Activated CD4-positive, alpha-beta T cell treated with anti-CD3 and anti-CD28 coated beads, Interleukin-2, amount 10 ng/mL, durations not matched to agents 24 days and 14 days (primary cell): ENCODE measurements at regions of chr2 and their contacts with region 1.

Region 1: DNA sequence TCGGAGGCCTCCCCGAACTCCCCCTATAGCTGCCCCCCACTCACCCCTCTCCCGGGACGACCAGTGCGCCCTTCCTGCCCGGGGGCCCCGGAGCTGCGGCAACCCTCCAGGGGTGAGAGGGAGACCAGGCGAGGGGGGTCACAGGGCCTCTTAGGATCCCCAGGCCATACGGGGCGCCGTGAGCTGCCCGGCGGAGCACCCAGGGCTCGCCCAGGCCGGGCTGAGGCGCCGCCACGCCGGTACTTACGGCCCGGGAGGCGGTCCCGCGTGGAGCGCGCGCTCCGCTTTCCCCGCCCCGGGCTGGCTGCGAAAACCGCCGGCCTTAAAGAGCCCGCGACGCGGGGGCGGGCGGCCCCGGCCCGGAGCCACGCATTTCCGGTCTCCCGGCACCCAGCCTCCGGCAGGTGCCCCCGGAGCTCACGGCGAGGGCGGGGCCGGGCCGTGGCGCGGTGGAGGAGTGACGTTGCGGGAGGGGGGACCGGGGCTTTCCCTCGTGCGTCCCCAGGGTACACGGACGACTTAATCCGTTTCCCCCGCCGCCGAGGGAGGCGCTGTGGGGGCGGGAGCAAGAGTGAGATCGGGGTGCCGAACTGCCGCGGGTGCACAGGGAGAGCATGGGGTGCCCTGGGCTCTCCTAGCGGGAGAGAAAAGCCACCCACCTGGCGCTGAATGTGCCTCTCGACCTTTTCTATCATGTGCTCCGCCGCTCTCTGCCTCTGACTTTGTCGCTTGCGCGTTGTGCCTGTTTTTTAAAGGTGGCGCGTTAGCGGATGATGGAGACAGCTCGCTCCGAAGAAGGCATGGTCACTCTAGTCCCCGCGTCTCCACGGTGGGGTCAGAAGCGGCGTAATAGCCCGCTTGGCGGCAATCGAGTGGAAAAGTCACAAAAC is at the start of gene METTL21A:
- DNase-seq: peak; percentile 98
- H3K4me3 Mint-ChIP-seq: peak within 1 kb of the TSS; percentile 95
- H3K27ac Mint-ChIP-seq: peak within 1 kb of the TSS; percentile 98
- H3K4me1 Mint-ChIP-seq: peaks cover 32% of the 10 kb centered on the region
- H3K27me3 Mint-ChIP-seq: no peaks in the 10 kb centered on the region
- total RNA-seq, gene METTL21A: 37.9 and 42.6 TPM in 2 replicates

Region 2: GRCh38 chr2:206765242-206766056 is 859.8 kb before region 1 on chr2 and contains the starts of genes FASTKD2 and MDH1B:
- intact Hi-C with region 1: loop called (anchors 2 kb)
- DNase-seq: peak; percentile 95
- H3K4me3 Mint-ChIP-seq: peak within 1 kb of the TSS; percentile 95
- H3K27ac Mint-ChIP-seq: peak within 1 kb of the TSS; percentile 99
- H3K4me1 Mint-ChIP-seq: peaks cover 29% of the 10 kb centered on the region
- H3K27me3 Mint-ChIP-seq: peaks cover 4% of the 10 kb centered on the region
- total RNA-seq, gene FASTKD2: 39.1 and 39.2 TPM in 2 replicates
- total RNA-seq, gene MDH1B: 0.12 and 0.47 TPM in 2 replicates

Region 3: GRCh38 chr2:207640661-207641060 is 15.4 kb after region 1 on chr2:
- intact Hi-C with region 1: no loop called
- DNase-seq: no peak
- H3K4me3 Mint-ChIP-seq: no peak overlapping the region
- H3K27ac Mint-ChIP-seq: no peak overlapping the region
- H3K4me1 Mint-ChIP-seq: no peaks in the 10 kb centered on the region
- H3K27me3 Mint-ChIP-seq: peaks cover 7% of the 10 kb centered on the region

Region 4: GRCh38 chr2:207710814-207711740 is 85.8 kb after region 1 on chr2 and contains the start of gene CCNYL1:
- intact Hi-C with region 1: loop called (anchors 1 kb)
- DNase-seq: peak; percentile 99
- H3K4me3 Mint-ChIP-seq: peak within 1 kb of the TSS; percentile 100
- H3K27ac Mint-ChIP-seq: peak within 1 kb of the TSS; percentile 88
- H3K4me1 Mint-ChIP-seq: peaks cover 23% of the 10 kb centered on the region
- H3K27me3 Mint-ChIP-seq: no peaks in the 10 kb centered on the region
- total RNA-seq, gene CCNYL1: 6.1 and 8.7 TPM in 2 replicates

Region 5: DNA sequence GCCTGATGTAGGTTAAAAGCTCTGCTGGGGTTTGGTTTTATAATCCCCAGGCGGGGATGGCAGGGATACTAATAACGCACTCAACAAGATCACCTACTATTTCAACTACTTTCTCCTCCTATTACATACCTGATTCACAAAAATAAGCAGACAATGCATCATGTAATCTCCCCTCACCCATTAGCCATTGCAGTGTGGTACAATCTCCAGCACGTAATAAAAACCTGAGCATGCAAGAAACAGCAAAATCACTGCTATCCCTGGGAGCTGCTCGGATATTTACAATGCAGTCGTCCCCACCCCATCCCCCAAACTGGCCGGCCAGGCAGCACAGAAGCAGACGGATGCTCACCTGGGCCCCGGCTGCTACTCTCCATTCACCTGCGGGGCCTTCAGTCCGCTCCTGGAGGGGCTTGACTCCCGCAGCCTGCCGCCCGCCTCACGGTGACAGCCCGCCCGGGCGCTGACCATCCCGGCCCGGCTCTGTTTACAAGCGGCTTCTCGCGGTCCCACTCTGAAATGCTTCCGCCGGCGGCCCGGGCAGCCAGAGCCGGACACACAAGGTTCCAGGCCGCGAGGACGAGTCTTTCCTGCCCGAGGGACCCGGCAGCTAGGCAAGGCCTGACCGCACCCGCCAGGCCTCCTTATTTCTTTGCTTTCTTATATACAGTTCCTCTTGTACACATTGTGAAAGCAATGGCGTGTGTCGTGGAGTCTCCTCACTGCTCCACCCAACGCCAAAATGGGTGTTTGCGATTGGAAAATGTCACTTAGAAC is 400.0 kb after region 1 on chr2 and contains the start of gene PLEKHM3:
- intact Hi-C with region 1: loop called (anchors 1 kb)
- DNase-seq: peak; percentile 94
- H3K4me3 Mint-ChIP-seq: peak within 1 kb of the TSS; percentile 93
- H3K27ac Mint-ChIP-seq: peak within 1 kb of the TSS; percentile 84
- H3K4me1 Mint-ChIP-seq: peaks cover 10% of the 10 kb centered on the region
- H3K27me3 Mint-ChIP-seq: no peaks in the 10 kb centered on the region
- total RNA-seq, gene PLEKHM3: 5.8 and 6.6 TPM in 2 replicates

Region 6: GRCh38 chr2:208254871-208255556 is 629.8 kb after region 1 on chr2 and contains the start of gene IDH1:
- intact Hi-C with region 1: loop called (anchors 5 kb)
- DNase-seq: peak; percentile 98
- H3K4me3 Mint-ChIP-seq: peak within 1 kb of the TSS; percentile 97
- H3K27ac Mint-ChIP-seq: peak within 1 kb of the TSS; percentile 81
- H3K4me1 Mint-ChIP-seq: peaks cover 20% of the 10 kb centered on the region
- H3K27me3 Mint-ChIP-seq: peaks cover 5% of the 10 kb centered on the region
- total RNA-seq, gene IDH1: 25.4 and 26.0 TPM in 2 replicates